IMR-90 (cell line): ENCODE measurements at regions of chr3 and their contacts with region 1.

Region 1: DNA sequence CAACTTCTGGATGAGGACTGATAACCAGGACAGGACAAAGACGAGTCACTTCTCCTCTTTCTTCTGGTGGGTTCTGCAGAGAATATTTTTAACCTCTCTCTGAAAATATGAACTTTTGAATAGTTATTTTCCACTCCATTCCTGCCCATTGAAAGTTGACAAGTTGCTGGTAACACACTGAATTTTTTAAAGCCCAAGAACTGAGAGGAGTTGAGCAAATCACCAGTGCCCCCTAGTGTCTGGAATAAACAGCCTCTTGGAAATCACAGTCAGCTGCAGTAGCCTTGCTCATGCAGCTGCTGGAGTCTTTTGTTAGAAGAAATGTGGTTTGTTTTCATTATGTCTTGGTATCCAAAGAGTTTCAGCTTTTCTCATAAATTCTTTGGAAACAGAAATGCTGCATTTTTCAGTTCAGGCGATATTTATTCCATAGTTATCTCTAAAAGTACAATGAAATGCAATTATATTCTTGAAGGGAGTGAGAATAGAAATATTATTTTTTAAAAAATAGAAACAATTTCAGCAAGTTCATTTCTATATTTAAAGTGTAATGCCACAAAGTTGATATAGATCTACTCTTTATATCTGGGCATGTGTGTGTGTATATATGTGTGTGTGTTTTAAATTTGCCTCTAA is 741.0 kb upstream of the CBLB start:
- DNase-seq: peak; percentile 93
- ATAC-seq: peak; percentile 90
- H3K4me3 ChIP-seq: no peak overlapping the region
- H3K27ac ChIP-seq: no peak overlapping the region
- H3K4me1 ChIP-seq: peaks cover 4% of the 10 kb centered on the region
- H3K27me3 ChIP-seq: no peaks in the 10 kb centered on the region
- CTCF ChIP-seq: peak; percentile 98
- POLR2A ChIP-seq: 0 out of 2 replicates have a peak, but pooled peaks have one; percentile 33
- RAD21 ChIP-seq: peak; percentile 97

Region 2: GRCh38 chr3:105538483-105538882 is 1071.3 kb before region 1 on chr3:
- CTCF ChIA-PET with region 1: no interaction called
- POLR2A ChIA-PET with region 1: no interaction called
- dilution Hi-C with region 1: no loop called
- in situ Hi-C with region 1: no loop called
- intact Hi-C with region 1: loop called (anchors 10 kb)
- DNase-seq: no peak
- ATAC-seq: no peak
- H3K4me3 ChIP-seq: no peak overlapping the region
- H3K27ac ChIP-seq: no peak overlapping the region
- H3K4me1 ChIP-seq: peaks cover 15% of the 10 kb centered on the region
- H3K27me3 ChIP-seq: no peaks in the 10 kb centered on the region
- CTCF ChIP-seq: no peak
- POLR2A ChIP-seq: no peak
- RAD21 ChIP-seq: no peak

Region 3: GRCh38 chr3:105691633-105692032 is 918.2 kb before region 1 on chr3:
- CTCF ChIA-PET with region 1: interaction called, 9 read pairs
- POLR2A ChIA-PET with region 1: no interaction called
- dilution Hi-C with region 1: no loop called
- in situ Hi-C with region 1: loop called (anchors 10 kb)
- intact Hi-C with region 1: loop called (anchors 1 kb)
- DNase-seq: no peak
- ATAC-seq: no peak
- H3K4me3 ChIP-seq: no peak overlapping the region
- H3K27ac ChIP-seq: no peak overlapping the region
- H3K4me1 ChIP-seq: no peaks in the 10 kb centered on the region
- H3K27me3 ChIP-seq: no peaks in the 10 kb centered on the region
- CTCF ChIP-seq: no peak
- POLR2A ChIP-seq: no peak
- RAD21 ChIP-seq: no peak

Region 4: DNA sequence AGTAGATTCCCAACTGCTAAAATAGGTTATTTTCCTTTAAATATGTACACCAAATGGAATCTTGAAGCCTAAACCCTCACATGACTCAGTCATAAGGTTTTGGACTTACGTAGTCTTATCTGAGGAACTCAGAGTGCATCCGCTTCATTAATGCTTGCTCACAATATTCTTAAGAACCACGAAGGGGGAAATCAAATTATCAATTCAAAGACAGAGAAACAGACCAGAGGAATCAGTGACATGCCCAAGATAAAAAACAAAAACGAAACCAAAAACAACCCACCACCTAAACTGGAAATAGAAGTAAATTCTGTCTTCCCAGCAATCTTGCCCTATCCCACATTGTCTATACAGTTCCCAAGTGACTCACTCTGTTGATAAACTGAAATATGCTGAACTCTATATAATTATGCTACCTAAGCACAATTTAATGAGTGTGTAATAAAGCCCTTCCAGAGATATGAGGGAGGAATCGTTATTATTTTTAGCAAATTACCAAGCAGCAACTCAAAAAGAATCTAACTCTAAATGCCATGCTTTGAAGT is 605.6 kb before region 1 on chr3:
- CTCF ChIA-PET with region 1: no interaction called
- POLR2A ChIA-PET with region 1: no interaction called
- dilution Hi-C with region 1: no loop called
- in situ Hi-C with region 1: no loop called
- intact Hi-C with region 1: loop called (anchors 5 kb)
- DNase-seq: peak; percentile 91
- ATAC-seq: peak; percentile 83
- H3K4me3 ChIP-seq: peak overlapping the region; percentile 75; the same call in 1 of the 2 replicates
- H3K27ac ChIP-seq: peak overlapping the region; percentile 29; the same call in 1 of the 2 replicates
- H3K4me1 ChIP-seq: peaks cover 4% of the 10 kb centered on the region
- H3K27me3 ChIP-seq: no peaks in the 10 kb centered on the region
- CTCF ChIP-seq: no peak
- POLR2A ChIP-seq: no peak
- RAD21 ChIP-seq: no peak

Region 5: DNA sequence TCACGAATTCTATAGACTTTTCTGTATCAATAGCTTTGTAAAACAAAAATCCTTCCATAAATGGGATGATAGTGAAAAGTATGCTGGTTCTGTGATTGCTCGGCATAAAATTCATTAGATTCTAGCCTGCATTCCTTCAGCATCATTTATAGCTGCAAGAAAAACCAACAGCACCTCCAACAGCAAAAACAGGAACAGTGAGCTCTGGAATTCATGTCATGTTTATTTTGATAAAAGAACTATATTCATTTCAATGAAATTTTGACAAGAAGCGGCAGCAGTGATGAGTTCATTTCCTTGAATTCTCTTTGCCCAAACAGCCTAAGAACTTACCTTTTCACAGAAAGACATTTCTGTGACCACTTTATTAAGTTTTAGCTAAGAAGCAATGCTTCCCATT is 252.3 kb after region 1 on chr3:
- CTCF ChIA-PET with region 1: interaction called, 7 read pairs
- POLR2A ChIA-PET with region 1: no interaction called
- dilution Hi-C with region 1: no loop called
- in situ Hi-C with region 1: no loop called
- intact Hi-C with region 1: loop called (anchors 1 kb)
- DNase-seq: peak; percentile 70
- ATAC-seq: peak; percentile 91
- H3K4me3 ChIP-seq: no peak overlapping the region
- H3K27ac ChIP-seq: no peak overlapping the region
- H3K4me1 ChIP-seq: 0 out of 2 replicates have a peak, but pooled peaks cover 1% of the 10 kb centered on the region
- H3K27me3 ChIP-seq: no peaks in the 10 kb centered on the region
- CTCF ChIP-seq: peak; percentile 55
- POLR2A ChIP-seq: no peak
- RAD21 ChIP-seq: peak; percentile 69

Region 6: GRCh38 chr3:106877627-106878026 is 267.8 kb after region 1 on chr3:
- CTCF ChIA-PET with region 1: no interaction called
- POLR2A ChIA-PET with region 1: no interaction called
- dilution Hi-C with region 1: no loop called
- in situ Hi-C with region 1: no loop called
- intact Hi-C with region 1: no loop called
- DNase-seq: no peak
- ATAC-seq: no peak
- H3K4me3 ChIP-seq: no peak overlapping the region
- H3K27ac ChIP-seq: no peak overlapping the region
- H3K4me1 ChIP-seq: no peaks in the 10 kb centered on the region
- H3K27me3 ChIP-seq: no peaks in the 10 kb centered on the region
- CTCF ChIP-seq: no peak
- POLR2A ChIP-seq: no peak
- RAD21 ChIP-seq: no peak